ENCODE measurements at regions of chr4 and their contacts with region 1.

Region 1: DNA sequence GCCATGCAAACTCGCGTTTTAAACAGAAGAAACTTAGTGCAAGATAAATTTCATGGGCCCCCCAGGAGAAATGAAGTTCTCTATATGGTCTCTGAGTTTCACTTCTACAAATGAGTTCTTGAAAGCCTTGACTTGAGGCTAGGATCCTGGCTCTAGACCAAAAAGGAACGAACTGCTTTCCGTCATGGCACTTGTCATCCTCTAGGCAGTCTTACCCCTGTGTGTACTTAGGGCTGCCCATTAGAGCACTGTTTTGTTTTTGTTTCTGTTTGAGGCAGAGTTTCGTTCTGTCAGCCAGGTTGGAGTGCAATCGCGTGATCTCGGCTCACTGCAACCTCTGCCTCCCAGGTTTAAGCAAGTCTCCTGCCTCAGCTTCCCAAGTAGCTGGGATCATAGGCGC is 29.0 kb downstream of the RNF4 start:
- DNase-seq: no peak
- ATAC-seq: peak; percentile 91
- H3K4me3 Mint-ChIP-seq: peak overlapping the region; percentile 55
- H3K27ac Mint-ChIP-seq: peak overlapping the region; percentile 84
- H3K4me1 Mint-ChIP-seq: peaks cover 44% of the 10 kb centered on the region
- H3K27me3 Mint-ChIP-seq: no peaks in the 10 kb centered on the region
- CTCF ChIP-seq: no peak

Region 2: DNA sequence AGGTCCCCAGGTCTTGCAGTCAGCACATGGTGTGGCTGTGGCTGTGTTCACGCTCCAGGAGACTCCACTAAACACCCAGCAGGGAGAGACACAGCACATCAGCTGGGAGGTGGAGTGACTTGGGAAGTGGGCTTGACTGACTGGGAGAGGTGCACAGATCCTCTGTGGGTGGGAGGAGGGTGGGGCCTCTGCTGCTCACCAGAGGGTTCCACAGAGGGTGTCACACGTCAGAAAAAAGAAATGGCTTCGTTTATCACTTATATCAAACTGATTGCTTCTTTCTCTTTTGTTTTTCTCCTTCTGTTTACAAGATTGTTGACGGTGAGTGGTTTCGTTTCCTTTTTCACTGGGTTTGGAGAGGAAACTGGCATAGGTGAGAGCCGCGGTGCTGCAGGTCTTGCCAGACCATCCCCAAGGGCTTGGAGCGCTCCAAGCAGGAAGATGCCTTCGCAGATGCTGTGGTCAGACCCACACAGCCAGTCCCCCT is 13.8 kb after region 1 on chr4:
- CTCF ChIA-PET with region 1: no interaction called
- POLR2A ChIA-PET with region 1: interaction called, 11 read pairs
- intact Hi-C with region 1: no loop called
- DNase-seq: no peak
- ATAC-seq: peak; percentile 53
- H3K4me3 Mint-ChIP-seq: peak overlapping the region; percentile 24
- H3K27ac Mint-ChIP-seq: peak overlapping the region; percentile 80
- H3K4me1 Mint-ChIP-seq: peaks cover 24% of the 10 kb centered on the region
- H3K27me3 Mint-ChIP-seq: no peaks in the 10 kb centered on the region
- CTCF ChIP-seq: no peak

Measured in activated B cell treated with CpG ODN at 0.5 μM for 24 hours (primary cell).